ENCODE measurements at regions of chr2 and their contacts with region 1.

Region 1: GRCh38 chr2:210895132-210895531 is 338.7 kb downstream of the CPS1 start:
- DNase-seq: peak; percentile 54
- ATAC-seq: peak; percentile 100
- H3K4me3 ChIP-seq: no peak overlapping the region
- H3K27ac ChIP-seq: no peak overlapping the region
- H3K4me1 ChIP-seq: peaks cover 14% of the 10 kb centered on the region; the same call in 1 of the 2 replicates
- H3K27me3 ChIP-seq: no peaks in the 10 kb centered on the region; a peak in 1 of 5 replicates
- CTCF ChIP-seq: peak; percentile 79
- EP300 ChIP-seq: no peak
- POLR2A ChIP-seq: no peak
- RAD21 ChIP-seq: peak; percentile 31; the same call in 1 of the 2 replicates

Region 2: DNA sequence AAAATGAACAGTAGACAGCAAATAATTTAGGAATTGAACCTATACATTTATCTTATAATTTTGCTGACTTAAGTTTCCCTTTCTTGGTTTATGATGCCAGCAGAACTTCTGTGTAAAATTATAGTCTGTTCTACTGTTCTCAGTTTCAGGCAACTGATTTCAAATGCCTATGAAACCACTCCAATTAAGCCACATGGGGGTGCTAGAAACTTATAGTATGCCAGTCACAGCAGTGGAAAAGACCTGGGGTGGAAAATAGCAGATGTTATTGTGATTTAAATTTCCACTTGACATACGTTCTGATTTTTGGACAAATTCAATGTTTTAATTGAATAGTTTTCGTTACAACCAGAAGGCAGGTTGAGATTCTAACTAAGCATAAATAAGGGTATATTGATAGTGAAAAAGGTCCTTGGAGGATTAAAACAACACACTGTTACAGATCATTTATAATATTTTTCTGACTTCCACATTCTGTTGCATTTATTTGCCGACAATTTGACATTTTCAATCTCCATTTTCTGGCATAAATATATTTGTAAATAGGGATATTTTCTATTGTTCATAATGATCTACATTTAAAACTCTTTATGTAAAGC is 277.3 kb before region 1 on chr2:
- CTCF ChIA-PET with region 1: no interaction called
- POLR2A ChIA-PET with region 1: no interaction called
- in situ Hi-C with region 1: no loop called
- intact Hi-C with region 1: loop called (anchors 1 kb)
- DNase-seq: peak; percentile 64
- ATAC-seq: peak; percentile 96
- H3K4me3 ChIP-seq: no peak overlapping the region
- H3K27ac ChIP-seq: no peak overlapping the region
- H3K4me1 ChIP-seq: peaks cover 8% of the 10 kb centered on the region; the same call in 1 of the 2 replicates
- H3K27me3 ChIP-seq: no peaks in the 10 kb centered on the region
- CTCF ChIP-seq: peak; percentile 84
- EP300 ChIP-seq: no peak
- POLR2A ChIP-seq: no peak
- RAD21 ChIP-seq: peak; percentile 70

Region 3: DNA sequence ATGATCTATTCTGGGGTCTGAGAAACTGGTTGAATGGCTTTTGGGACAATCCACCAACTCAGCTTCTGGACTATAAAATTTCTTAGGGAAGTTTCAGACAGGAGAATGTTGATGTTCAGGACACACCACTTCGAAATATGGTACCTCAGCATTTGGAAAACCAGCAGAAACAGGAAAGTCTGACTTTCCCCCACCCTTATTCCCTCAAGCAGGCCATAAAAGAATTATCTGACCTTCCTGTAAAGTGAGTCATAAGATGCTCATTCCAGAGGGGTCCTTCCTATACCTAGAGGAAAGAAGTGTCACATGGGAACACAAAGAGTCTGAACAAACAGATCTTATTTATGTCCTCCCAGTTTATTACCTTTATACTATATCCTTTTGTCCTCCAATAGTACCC is 76.3 kb after region 1 on chr2:
- CTCF ChIA-PET with region 1: no interaction called
- POLR2A ChIA-PET with region 1: no interaction called
- in situ Hi-C with region 1: no loop called
- intact Hi-C with region 1: no loop called
- DNase-seq: no peak
- ATAC-seq: no peak
- H3K4me3 ChIP-seq: no peak overlapping the region
- H3K27ac ChIP-seq: no peak overlapping the region
- H3K4me1 ChIP-seq: peaks cover 11% of the 10 kb centered on the region
- H3K27me3 ChIP-seq: no peaks in the 10 kb centered on the region
- CTCF ChIP-seq: no peak
- EP300 ChIP-seq: no peak
- POLR2A ChIP-seq: no peak
- RAD21 ChIP-seq: no peak

Region 4: DNA sequence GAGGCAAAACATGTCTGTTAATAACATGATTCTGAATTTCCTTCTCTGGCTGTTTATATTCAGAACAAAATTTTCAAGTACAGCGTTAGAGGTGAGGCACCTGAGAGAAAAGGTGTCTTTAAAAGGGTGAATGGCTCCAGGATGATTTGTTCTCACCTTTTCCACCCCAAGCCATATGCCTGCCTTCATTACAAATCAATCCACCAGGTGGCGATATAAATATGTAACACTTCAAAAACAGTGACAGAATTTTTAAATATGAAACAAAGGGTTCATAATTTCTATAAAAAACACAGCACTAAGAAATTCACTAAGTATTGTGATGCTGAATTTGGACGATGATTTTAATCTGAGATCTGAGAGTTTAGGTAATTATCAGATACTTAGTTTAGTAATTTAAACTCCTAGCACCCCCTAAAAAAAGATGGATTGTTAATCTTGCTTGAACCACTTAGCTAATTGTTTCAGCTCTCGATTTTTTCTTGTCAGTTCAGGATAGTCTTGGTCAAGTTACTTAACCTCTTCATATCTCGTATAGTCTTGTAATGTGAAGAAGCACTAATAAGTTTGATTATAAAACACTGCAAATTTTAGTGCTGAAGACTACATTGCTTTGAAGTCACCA is 190.0 kb after region 1 on chr2:
- CTCF ChIA-PET with region 1: no interaction called
- POLR2A ChIA-PET with region 1: no interaction called
- in situ Hi-C with region 1: no loop called
- intact Hi-C with region 1: loop called (anchors 1 kb)
- DNase-seq: peak; percentile 49
- ATAC-seq: peak; percentile 69
- H3K4me3 ChIP-seq: no peak overlapping the region
- H3K27ac ChIP-seq: no peak overlapping the region
- H3K4me1 ChIP-seq: no peaks in the 10 kb centered on the region
- H3K27me3 ChIP-seq: no peaks in the 10 kb centered on the region
- CTCF ChIP-seq: peak; percentile 57
- EP300 ChIP-seq: no peak
- POLR2A ChIP-seq: no peak
- RAD21 ChIP-seq: no peak

Measured in HepG2 (cell line).